ENCODE measurements at regions of chr4 and their contacts with region 1.

Region 1: GRCh38 chr4:38062088-38062893 is 102.1 kb downstream of the PTTG2 start:
- DNase-seq: no peak
- ATAC-seq: peak; percentile 49
- H3K4me3 Mint-ChIP-seq: peak overlapping the region; percentile 57
- H3K27ac Mint-ChIP-seq: no peak overlapping the region
- H3K4me1 Mint-ChIP-seq: peaks cover 14% of the 10 kb centered on the region
- H3K27me3 Mint-ChIP-seq: no peaks in the 10 kb centered on the region
- CTCF ChIP-seq: peak; percentile 81

Region 2: DNA sequence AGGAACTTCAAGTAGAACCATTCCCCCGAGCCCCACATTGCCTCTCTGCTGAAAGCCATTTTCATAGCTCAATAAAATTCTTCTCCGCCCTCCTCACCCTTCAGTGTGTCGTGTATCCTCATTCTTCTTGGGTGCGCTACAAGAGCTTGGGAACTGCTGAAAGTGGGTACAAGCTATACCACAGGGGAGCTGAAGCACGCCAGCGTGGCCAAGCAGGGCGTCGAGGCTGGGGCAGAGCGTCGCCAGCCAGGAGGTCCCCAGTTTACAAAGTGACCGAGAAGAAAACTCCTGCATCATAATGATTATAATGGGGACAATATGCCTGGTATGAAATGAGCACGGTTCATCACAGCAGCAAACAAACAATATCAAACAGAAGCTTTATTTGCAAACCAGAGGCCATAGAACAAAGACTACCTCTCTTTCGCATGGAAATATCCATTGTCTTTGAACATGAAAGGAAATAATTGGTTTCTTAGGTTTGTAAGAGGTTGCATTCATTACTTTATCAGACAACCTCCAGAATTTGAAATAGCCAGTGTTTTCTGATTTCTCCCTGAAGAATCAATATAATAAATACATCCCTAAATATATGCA is 410.4 kb before region 1 on chr4:
- CTCF ChIA-PET with region 1: no interaction called
- POLR2A ChIA-PET with region 1: interaction called, 10 read pairs
- intact Hi-C with region 1: no loop called
- DNase-seq: no peak
- ATAC-seq: no peak
- H3K4me3 Mint-ChIP-seq: no peak overlapping the region
- H3K27ac Mint-ChIP-seq: no peak overlapping the region
- H3K4me1 Mint-ChIP-seq: no peaks in the 10 kb centered on the region
- H3K27me3 Mint-ChIP-seq: no peaks in the 10 kb centered on the region
- CTCF ChIP-seq: no peak

Region 3: DNA sequence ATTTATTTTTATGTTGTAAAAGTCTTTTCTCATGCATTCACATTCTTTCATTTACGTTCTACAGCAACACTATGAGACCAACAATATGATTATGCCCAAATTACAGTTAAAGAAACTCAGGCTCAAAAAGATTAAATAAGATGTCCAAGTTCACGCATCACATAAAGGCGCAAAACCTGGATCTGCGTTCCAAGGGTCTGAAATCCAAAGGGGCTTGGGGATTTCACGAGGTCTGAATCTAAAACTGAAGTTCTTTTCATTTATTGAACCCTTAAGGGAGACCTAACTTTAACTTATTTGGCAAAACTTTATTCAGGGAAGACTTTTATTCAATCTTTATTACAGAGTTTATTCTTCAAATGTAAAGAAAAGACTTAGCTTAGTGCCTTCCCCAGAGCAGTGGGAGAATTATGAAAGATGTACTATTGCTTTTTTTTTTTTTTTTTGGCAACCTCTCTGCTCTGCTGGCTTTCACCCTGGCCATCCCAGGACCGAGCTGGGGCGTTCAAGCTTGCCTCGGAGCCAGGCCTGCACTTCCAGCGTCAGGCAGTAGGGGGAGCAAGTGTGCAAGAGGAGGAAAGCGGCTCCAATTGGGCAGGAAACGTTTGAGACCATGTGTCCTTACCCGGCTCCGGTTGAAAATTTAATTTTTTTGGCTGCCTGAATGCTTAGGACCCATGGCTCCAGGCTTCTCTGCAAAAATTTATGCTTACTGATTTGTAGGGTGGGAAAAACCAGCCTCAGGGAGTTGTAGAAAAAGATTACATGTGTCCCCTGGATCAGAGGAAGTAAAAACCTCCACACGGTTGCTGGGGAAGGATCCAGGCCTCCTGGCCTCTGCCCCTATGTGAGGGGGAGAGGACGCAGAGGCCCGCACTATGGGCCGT is 257.4 kb after region 1 on chr4:
- CTCF ChIA-PET with region 1: no interaction called
- POLR2A ChIA-PET with region 1: no interaction called
- intact Hi-C with region 1: loop called (anchors 5 kb)
- DNase-seq: peak; percentile 84
- ATAC-seq: peak; percentile 77
- H3K4me3 Mint-ChIP-seq: peak overlapping the region; percentile 78
- H3K27ac Mint-ChIP-seq: peak overlapping the region; percentile 88
- H3K4me1 Mint-ChIP-seq: peaks cover 28% of the 10 kb centered on the region
- H3K27me3 Mint-ChIP-seq: no peaks in the 10 kb centered on the region
- CTCF ChIP-seq: peak; percentile 72